Activated T-helper 2 cell treated with anti-CD3 and anti-CD28 coated beads, Interferon-gamma antibody, Interleukin-2, Interleukin-4, amounts not matched to agents 10 μg/mL and 5 μg/mL and 100 μg/mL, durations not matched to agents 14 hours and 24 hours and 36 hours (primary cell): ENCODE measurements at regions of chr2 and their contacts with region 1.

Region 1: GRCh38 chr2:240434728-240435456 is 571 bp upstream of the GPC1 start:
- DNase-seq: peak; percentile 88
- H3K4me3 Mint-ChIP-seq: peak overlapping the region; percentile 85
- H3K27ac Mint-ChIP-seq: peak overlapping the region; percentile 65
- H3K4me1 Mint-ChIP-seq: peaks cover 9% of the 10 kb centered on the region
- H3K27me3 Mint-ChIP-seq: peaks cover 15% of the 10 kb centered on the region

Region 2: GRCh38 chr2:240149943-240150784 is 284.7 kb before region 1 on chr2:
- intact Hi-C with region 1: loop called (anchors 2 kb)
- DNase-seq: no peak
- H3K4me3 Mint-ChIP-seq: no peak overlapping the region
- H3K27ac Mint-ChIP-seq: no peak overlapping the region
- H3K4me1 Mint-ChIP-seq: peaks cover 2% of the 10 kb centered on the region
- H3K27me3 Mint-ChIP-seq: no peaks in the 10 kb centered on the region

Region 3: GRCh38 chr2:240232961-240233893 is 201.7 kb before region 1 on chr2:
- intact Hi-C with region 1: loop called (anchors 1 kb)
- DNase-seq: peak; percentile 58
- H3K4me3 Mint-ChIP-seq: no peak overlapping the region
- H3K27ac Mint-ChIP-seq: no peak overlapping the region
- H3K4me1 Mint-ChIP-seq: no peaks in the 10 kb centered on the region
- H3K27me3 Mint-ChIP-seq: peaks cover 2% of the 10 kb centered on the region

Region 4: DNA sequence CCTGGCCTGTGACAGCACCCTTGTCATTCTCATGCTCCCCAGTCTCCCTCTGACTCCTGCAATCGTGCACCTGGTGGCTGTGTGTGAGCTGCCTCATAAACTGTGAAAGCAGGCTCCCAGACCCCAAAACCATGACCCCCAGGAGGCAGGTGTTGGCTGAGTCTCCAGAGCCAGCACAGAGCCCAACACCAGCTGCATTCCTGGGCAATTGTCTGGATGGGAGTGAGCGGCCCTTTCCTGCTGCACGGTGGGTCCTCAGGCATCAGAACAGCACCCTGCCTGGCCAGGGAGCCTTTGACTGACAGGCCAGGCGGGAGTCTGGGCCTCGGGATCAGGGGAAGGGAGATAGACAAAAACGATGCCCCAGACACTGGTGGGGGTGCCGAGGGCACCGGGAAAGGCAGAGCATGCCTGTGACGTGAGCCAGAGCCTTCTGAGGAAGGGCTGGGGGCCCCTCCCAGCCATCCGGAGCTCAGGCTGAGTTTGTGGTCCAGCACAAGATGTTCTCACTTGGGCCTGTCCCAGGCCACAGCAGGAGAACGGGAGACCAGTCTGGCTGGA is 134.6 kb before region 1 on chr2:
- intact Hi-C with region 1: loop called (anchors 10 kb)
- DNase-seq: no peak
- H3K4me3 Mint-ChIP-seq: no peak overlapping the region
- H3K27ac Mint-ChIP-seq: no peak overlapping the region
- H3K4me1 Mint-ChIP-seq: no peaks in the 10 kb centered on the region
- H3K27me3 Mint-ChIP-seq: no peaks in the 10 kb centered on the region

Region 5: GRCh38 chr2:240387669-240388358 is 47.1 kb before region 1 on chr2:
- intact Hi-C with region 1: loop called (anchors 10 kb)
- DNase-seq: no peak
- H3K4me3 Mint-ChIP-seq: no peak overlapping the region
- H3K27ac Mint-ChIP-seq: no peak overlapping the region
- H3K4me1 Mint-ChIP-seq: peaks cover 7% of the 10 kb centered on the region
- H3K27me3 Mint-ChIP-seq: no peaks in the 10 kb centered on the region

Region 6: GRCh38 chr2:240403396-240404104 is 31.3 kb before region 1 on chr2:
- intact Hi-C with region 1: loop called (anchors 1 kb)
- DNase-seq: no peak
- H3K4me3 Mint-ChIP-seq: peak overlapping the region; percentile 54
- H3K27ac Mint-ChIP-seq: peak overlapping the region; percentile 84
- H3K4me1 Mint-ChIP-seq: peaks cover 31% of the 10 kb centered on the region
- H3K27me3 Mint-ChIP-seq: peaks cover 2% of the 10 kb centered on the region

Region 7: GRCh38 chr2:240509667-240510512 is 75.0 kb after region 1 on chr2:
- intact Hi-C with region 1: no loop called
- DNase-seq: peak; percentile 6
- H3K4me3 Mint-ChIP-seq: no peak overlapping the region
- H3K27ac Mint-ChIP-seq: no peak overlapping the region
- H3K4me1 Mint-ChIP-seq: peaks cover 11% of the 10 kb centered on the region
- H3K27me3 Mint-ChIP-seq: no peaks in the 10 kb centered on the region